ENCODE measurements at regions of chr16 and their contacts with region 1.

Region 1: DNA sequence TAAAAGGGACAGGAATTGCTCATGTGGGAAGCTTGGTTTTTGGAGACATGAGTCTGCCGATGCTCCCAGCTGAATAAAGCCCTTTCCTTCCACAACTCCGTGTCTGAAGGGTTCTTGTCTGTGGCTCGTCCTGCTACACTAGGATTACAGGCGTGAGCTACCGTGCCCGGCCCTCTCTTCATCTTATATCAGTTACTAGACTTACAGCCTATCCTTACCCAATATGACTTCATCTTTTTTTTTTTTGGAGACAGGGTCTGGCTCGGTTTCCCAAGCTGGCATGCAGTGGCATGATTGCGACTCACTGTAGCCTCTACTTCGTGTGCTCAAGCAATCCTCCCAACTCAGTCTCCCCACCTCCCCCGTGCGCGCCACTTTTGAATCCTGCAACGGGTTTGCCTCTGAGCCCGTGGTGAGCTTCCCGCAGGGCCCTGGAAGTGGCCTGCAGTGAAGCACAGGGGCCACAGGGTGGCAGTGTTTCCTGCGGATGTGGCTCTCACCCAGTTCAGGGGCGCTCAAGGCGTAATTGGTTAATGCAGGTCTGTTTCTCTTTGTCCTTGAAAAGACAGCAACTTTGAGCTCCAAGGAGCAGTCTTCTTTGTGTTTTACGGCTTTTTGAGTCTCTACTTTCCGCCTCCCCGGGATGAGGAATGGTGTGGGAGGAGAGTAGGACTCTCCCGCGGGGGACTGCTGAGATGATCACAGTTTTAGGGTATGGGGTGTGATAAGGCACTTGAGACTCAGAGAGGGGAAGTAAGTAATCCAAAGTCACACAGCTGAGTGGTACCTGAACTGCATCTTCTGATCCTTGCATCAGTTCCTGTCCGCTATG is 22.7 kb upstream of the GPRC5B start:
- DNase-seq: peak; percentile 77
- ATAC-seq: peak; percentile 95
- H3K4me3 ChIP-seq: no peak overlapping the region
- H3K27ac ChIP-seq: no peak overlapping the region
- H3K4me1 ChIP-seq: no peaks in the 10 kb centered on the region
- H3K27me3 ChIP-seq: peaks cover 23% of the 10 kb centered on the region
- CTCF ChIP-seq: peak; percentile 94

Region 2: DNA sequence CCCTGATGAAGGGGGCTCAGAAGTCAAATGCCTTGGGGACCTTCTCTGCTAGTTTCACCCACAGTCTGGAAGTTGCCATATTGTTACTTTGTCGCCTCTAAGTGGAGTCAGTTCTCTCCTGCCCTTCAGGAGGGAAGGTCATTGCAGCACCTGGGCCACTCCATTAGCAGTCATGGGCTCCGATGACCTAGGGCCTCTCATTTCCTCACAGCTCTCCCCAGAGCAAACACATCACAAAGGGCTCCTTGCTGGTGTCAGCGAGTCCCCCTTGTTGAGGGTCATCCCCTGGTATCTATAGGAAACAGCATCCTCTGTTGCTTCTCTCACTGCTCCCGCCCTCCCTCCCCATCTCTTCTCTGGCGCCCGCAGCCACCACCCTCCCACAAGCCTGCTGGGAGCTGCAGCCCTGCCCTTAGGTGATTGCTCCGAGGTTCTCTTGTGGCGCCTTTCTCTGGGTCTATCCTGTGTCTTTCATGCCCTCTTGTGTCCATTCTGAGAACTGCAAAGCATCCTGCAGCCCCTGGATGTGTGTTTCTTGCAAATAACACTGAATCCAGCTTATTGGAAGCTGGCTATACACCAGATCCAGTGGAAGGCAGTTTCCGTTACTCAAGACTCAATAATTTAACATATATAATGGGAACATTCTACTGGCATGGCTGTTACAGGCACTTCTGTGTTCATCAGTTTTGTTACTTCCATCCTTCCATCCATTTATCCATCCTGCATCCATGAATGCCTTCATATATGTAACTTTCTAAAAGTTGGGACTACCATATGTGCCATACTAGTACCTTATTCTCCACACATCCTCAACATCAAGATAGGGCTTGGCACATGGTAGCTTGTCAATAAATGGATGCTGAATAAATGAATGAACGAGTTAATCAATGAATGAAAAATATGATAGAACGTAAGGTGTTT is 476.0 kb after region 1 on chr16:
- intact Hi-C with region 1: loop called (anchors 10 kb)
- DNase-seq: no peak
- ATAC-seq: peak; percentile 87
- H3K4me3 ChIP-seq: no peak overlapping the region
- H3K27ac ChIP-seq: no peak overlapping the region
- H3K4me1 ChIP-seq: no peaks in the 10 kb centered on the region
- H3K27me3 ChIP-seq: peaks cover 6% of the 10 kb centered on the region
- CTCF ChIP-seq: peak; percentile 76